ENCODE measurements at regions of chr19 and their contacts with region 1.

Region 1: GRCh38 chr19:45681391-45682015 is 10.2 kb downstream of the SNRPD2 start:
- DNase-seq: peak; percentile 76 to 94 (median 87)
- ATAC-seq: peak; percentile 92
- H3K4me3 ChIP-seq: peak overlapping the region; percentile 48
- H3K4me3 Mint-ChIP-seq: peak overlapping the region; percentile 74 to 88 (median 80)
- H3K27ac ChIP-seq: peak overlapping the region; percentile 37
- H3K27ac Mint-ChIP-seq: peak overlapping the region in 8 of 9 donors; percentile 43 to 87 (median 75)
- H3K4me1 ChIP-seq: peaks cover 13 to 16% of the 10 kb centered on the region in 2 donors
- H3K4me1 Mint-ChIP-seq: peaks cover 7 to 22% (median 20%) of the 10 kb centered on the region in 7 donors
- H3K27me3 ChIP-seq: no peaks in the 10 kb centered on the region
- H3K27me3 Mint-ChIP-seq: peaks cover 0 to 4% (median 0%) of the 10 kb centered on the region in 5 donors

Region 2: GRCh38 chr19:45423589-45424190 is 257.8 kb before region 1 on chr19 and contains the start of gene ERCC1:
- CTCF ChIA-PET with region 1: no interaction called
- POLR2A ChIA-PET with region 1: no interaction called
- intact Hi-C with region 1: loop called in 1 of 2 experiments (anchors 1 kb)
- DNase-seq: peak in 7 of 9 donors; percentile 25 to 83 (median 52)
- ATAC-seq: peak; percentile 71
- H3K4me3 ChIP-seq: peak within 1 kb of the TSS; percentile 72
- H3K4me3 Mint-ChIP-seq: peak within 1 kb of the TSS; percentile 88 to 100 (median 94)
- H3K27ac ChIP-seq: peak within 1 kb of the TSS; percentile 77
- H3K27ac Mint-ChIP-seq: peak within 1 kb of the TSS; percentile 83 to 97 (median 91)
- H3K4me1 ChIP-seq: peaks cover 24 to 28% of the 10 kb centered on the region in 2 donors
- H3K4me1 Mint-ChIP-seq: peaks cover 22 to 57% (median 50%) of the 10 kb centered on the region in 7 donors
- H3K27me3 ChIP-seq: peaks cover 0 to 3% of the 10 kb centered on the region in 2 donors
- H3K27me3 Mint-ChIP-seq: peaks cover 0 to 10% (median 3%) of the 10 kb centered on the region in 5 donors
- total RNA-seq, gene ERCC1: 45.1 to 88.2 (median 53.4) TPM

Region 3: GRCh38 chr19:45607071-45608029 is 74.2 kb before region 1 on chr19:
- CTCF ChIA-PET with region 1: interaction called, 3 read pairs
- POLR2A ChIA-PET with region 1: no interaction called
- intact Hi-C with region 1: loop called in 1 of 2 experiments (anchors 1 kb)
- DNase-seq: peak in 5 of 9 donors; percentile 23 to 61 (median 29)
- ATAC-seq: peak; percentile 62
- H3K4me3 ChIP-seq: no peak overlapping the region
- H3K4me3 Mint-ChIP-seq: peak overlapping the region in 7 of 10 donors; percentile 34 to 76 (median 47)
- H3K27ac ChIP-seq: no peak overlapping the region
- H3K27ac Mint-ChIP-seq: peak overlapping the region in 2 of 9 donors; percentile 32 to 82
- H3K4me1 ChIP-seq: peaks cover 0 to 5% of the 10 kb centered on the region in 2 donors
- H3K4me1 Mint-ChIP-seq: peaks cover 0 to 17% (median 6%) of the 10 kb centered on the region in 7 donors
- H3K27me3 ChIP-seq: peaks cover 0 to 3% of the 10 kb centered on the region in 2 donors
- H3K27me3 Mint-ChIP-seq: peaks cover 11 to 14% (median 12%) of the 10 kb centered on the region in 5 donors

Region 4: GRCh38 chr19:45670670-45671453 is 10.6 kb before region 1 on chr19:
- CTCF ChIA-PET with region 1: interaction called, 6 read pairs
- POLR2A ChIA-PET with region 1: interaction called, 18 read pairs
- intact Hi-C with region 1: loop called (anchors 1 kb)
- DNase-seq: peak in 4 of 9 donors; percentile 14 to 87 (median 31)
- ATAC-seq: peak; percentile 58
- H3K4me3 ChIP-seq: no peak overlapping the region
- H3K4me3 Mint-ChIP-seq: peak overlapping the region in 8 of 10 donors; percentile 39 to 96 (median 74)
- H3K27ac ChIP-seq: no peak overlapping the region
- H3K27ac Mint-ChIP-seq: peak overlapping the region in 1 of 9 donors; percentile 13
- H3K4me1 ChIP-seq: peaks cover 15 to 25% of the 10 kb centered on the region in 2 donors
- H3K4me1 Mint-ChIP-seq: peaks cover 30 to 39% (median 32%) of the 10 kb centered on the region in 7 donors
- H3K27me3 ChIP-seq: no peaks in the 10 kb centered on the region
- H3K27me3 Mint-ChIP-seq: peaks cover 0 to 22% (median 17%) of the 10 kb centered on the region in 5 donors

Region 5: DNA sequence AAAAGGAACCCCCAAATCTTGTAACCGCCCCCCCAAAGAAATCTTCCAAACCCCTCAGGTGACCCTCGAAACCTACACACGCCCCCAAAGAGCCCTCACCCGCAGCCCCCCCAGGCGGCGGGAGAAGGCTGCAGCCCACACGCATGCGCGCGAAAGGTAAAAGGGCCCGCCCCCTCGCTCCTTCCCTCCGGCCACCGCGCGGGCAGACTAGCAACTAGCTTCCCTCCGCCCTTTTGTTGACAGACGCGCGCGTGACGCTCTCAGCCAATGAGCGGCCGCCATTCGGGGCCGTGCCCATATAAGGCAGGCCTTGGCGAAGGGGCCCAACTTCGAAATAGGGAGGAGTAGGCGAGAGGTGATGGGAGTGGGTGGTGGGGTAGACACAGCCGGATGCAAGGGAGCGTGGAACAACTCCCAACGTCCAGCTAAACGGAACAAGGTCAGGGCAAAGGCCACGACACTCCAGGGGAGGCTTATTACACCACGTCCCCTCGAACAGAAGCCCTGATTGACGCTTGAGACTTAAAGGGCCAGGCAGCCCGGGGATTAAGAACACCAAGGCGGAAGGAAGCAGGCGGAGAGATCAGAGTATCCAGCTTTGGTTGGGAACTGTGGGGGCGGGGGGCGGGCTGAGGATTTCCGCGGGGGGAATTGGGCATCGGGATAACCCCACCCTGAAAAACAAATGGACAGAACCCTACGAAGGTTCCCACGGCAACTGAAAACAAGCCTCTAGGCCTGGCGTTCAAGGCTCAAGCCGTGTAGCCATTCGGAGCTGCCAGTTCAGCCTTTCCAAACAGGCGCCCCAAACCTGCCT is 35.9 kb after region 1 on chr19:
- CTCF ChIA-PET with region 1: interaction called, 6 read pairs
- POLR2A ChIA-PET with region 1: interaction called, 8 read pairs
- intact Hi-C with region 1: loop called in 1 of 2 experiments (anchors 1 kb)
- DNase-seq: peak; percentile 92 to 99 (median 98)
- ATAC-seq: peak; percentile 98
- H3K4me3 ChIP-seq: peak overlapping the region; percentile 80
- H3K4me3 Mint-ChIP-seq: peak overlapping the region; percentile 89 to 99 (median 95)
- H3K27ac ChIP-seq: peak overlapping the region; percentile 89
- H3K27ac Mint-ChIP-seq: peak overlapping the region; percentile 88 to 97 (median 96)
- H3K4me1 ChIP-seq: peaks cover 17 to 26% of the 10 kb centered on the region in 2 donors
- H3K4me1 Mint-ChIP-seq: peaks cover 26 to 55% (median 38%) of the 10 kb centered on the region in 7 donors
- H3K27me3 ChIP-seq: no peaks in the 10 kb centered on the region
- H3K27me3 Mint-ChIP-seq: no peaks in the 10 kb centered on the region

Region 6: DNA sequence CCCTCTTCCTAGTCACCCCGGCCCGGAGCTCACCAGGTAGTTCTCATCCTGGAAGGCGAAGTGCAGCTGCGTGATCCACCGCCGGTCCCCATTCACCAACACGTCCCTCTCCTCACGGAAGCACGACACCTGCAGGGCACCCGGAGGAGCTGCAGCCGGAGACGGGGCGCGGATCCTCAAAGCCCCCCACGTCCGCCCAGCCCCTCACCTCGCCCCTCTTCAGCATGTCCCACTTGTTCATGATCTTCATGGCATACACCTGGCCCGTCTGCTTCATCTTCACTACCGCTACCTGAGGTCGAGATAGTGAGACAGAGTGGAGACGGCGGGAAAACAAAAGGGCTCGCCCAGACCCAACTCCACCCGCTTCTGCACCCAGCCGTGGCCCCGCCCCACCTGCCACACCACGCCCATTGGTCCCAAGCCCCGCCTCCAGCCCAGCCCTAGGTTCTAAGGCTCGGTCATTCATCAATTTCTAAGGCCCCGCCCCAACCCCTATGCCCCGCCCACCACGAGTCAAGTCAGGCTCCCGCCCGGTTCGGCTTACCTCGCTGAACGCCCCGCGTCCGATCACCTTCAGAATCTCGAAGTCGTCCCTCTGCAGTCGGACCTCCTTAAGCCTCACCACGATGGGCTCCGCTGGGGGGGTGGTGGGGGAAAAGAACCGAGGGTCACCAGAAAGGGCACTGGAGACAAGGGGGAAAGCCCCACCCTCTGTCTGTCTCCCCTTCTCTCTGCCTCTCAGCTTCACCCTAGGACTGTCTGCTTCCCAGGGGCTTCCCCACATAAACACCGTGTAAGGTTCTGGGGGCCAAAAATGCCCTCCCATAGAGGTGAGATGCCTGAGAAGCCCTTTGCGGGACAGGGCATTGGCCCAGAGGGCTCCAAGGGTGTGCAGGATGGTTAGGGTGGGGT is 98.0 kb after region 1 on chr19:
- CTCF ChIA-PET with region 1: no interaction called
- POLR2A ChIA-PET with region 1: no interaction called
- intact Hi-C with region 1: loop called in 1 of 2 experiments (anchors 1 kb)
- DNase-seq: peak; percentile 41 to 94 (median 59)
- ATAC-seq: peak; percentile 95
- H3K4me3 ChIP-seq: peak overlapping the region; percentile 59
- H3K4me3 Mint-ChIP-seq: peak overlapping the region; percentile 69 to 95 (median 81)
- H3K27ac ChIP-seq: no peak overlapping the region
- H3K27ac Mint-ChIP-seq: peak overlapping the region in 1 of 9 donors; percentile 69
- H3K4me1 ChIP-seq: peaks cover 7 to 17% of the 10 kb centered on the region in 2 donors
- H3K4me1 Mint-ChIP-seq: peaks cover 13 to 28% (median 18%) of the 10 kb centered on the region in 7 donors
- H3K27me3 ChIP-seq: peaks cover 0 to 18% of the 10 kb centered on the region in 2 donors
- H3K27me3 Mint-ChIP-seq: peaks cover 15 to 39% (median 36%) of the 10 kb centered on the region in 5 donors

Measured in naive thymus-derived CD4-positive, alpha-beta T cell (primary cell).